Gastrocnemius medialis (tissue), 4 donors: ENCODE measurements at regions of chr6 and their contacts with region 1.

Region 1: DNA sequence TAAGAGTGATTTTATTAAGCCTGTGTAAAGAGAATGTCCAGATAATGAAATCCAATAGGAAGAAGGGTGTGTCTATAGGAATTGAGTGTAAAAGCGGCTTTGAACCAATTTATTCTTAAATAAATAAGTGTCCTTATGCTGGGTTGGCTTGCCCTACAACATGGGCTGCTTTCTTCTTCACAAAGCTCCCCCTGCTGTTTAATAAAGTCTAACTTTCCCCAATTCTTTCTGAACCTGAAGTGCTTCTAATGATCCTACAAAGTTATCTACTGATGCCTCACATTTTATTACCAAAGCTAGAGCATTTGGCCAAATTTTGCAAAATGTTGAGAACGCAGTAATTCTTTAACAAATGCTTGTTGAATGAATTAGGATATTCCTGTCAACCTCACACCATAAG is 36.3 kb upstream of the SIRT5 start:
- DNase-seq: no peak
- ATAC-seq: peak; percentile 85 to 86
- H3K4me3 ChIP-seq: no peak overlapping the region
- H3K27ac ChIP-seq: peak overlapping the region in 2 of 4 donors; percentile 14 to 17
- H3K4me1 ChIP-seq: peaks cover 0 to 3% of the 10 kb centered on the region in 2 donors
- H3K27me3 ChIP-seq: no peaks in the 10 kb centered on the region
- CTCF ChIP-seq: peak; percentile 56 to 68 (median 61)
- POLR2A ChIP-seq: no peak

Region 2: DNA sequence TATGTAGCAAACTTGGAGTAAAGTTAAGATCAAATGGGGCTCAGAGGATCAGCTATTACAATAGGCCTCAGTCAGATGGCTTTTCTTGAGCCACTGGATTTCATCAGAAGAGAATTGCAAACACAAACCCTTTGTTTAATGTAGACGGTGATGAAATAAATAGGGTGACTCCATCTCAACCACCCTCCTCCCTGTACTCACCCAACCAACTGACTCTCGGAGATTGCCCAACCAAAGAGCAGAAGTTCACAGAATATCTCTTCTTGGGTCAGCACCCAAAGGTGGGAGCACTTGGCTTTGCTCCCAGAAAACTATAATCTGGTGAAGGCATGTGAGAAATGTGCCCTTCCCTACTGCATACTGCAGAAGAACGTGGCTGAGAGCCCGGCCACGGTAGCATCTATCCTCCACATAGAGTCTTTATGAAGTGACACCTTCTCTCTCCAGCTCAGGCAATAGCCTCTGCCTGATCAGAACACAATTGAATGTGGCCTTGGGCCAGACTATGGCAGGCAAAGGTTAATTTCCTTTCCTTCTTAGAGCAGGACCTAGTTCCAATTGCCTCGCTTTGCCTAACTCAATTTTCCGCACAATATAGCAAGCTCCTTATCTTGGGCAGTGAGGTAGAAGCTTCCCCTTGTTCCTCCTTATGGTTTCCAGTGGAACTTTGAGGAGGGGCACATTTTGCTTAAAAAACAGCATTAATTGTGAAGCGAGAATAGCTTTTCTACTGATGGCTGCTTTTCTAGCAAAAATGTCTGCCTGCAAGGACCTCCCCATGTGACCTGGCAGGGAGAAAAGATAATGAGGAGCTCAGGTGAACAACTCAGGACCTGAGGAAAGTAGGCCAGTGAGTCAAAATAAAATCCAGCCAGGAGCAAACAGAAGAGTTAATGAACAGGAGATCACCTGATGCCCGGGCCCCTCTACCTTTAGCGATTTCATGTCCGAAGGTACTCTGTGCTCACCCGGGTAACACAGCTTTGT is 130.1 kb before region 1 on chr6:
- in situ Hi-C with region 1: loop called in 1 of 4 experiments (anchors 25 kb)
- intact Hi-C with region 1: no loop called
- DNase-seq: no peak
- ATAC-seq: peak; percentile 5 to 56
- H3K4me3 ChIP-seq: no peak overlapping the region
- H3K27ac ChIP-seq: peak overlapping the region; percentile 75 to 90 (median 78)
- H3K4me1 ChIP-seq: peaks cover 91 to 95% of the 10 kb centered on the region in 2 donors
- H3K27me3 ChIP-seq: no peaks in the 10 kb centered on the region
- CTCF ChIP-seq: no peak
- POLR2A ChIP-seq: no peak

Region 3: GRCh38 chr6:13454286-13455221 is 83.5 kb before region 1 on chr6:
- in situ Hi-C with region 1: no loop called
- intact Hi-C with region 1: loop called (anchors 2 kb)
- DNase-seq: peak; percentile 64
- ATAC-seq: peak; percentile 71 to 80
- H3K4me3 ChIP-seq: no peak overlapping the region
- H3K27ac ChIP-seq: peak overlapping the region; percentile 58 to 80 (median 72)
- H3K4me1 ChIP-seq: peaks cover 50 to 63% of the 10 kb centered on the region in 2 donors
- H3K27me3 ChIP-seq: no peaks in the 10 kb centered on the region
- CTCF ChIP-seq: peak in 4 of 5 experiments; percentile 24 to 50 (median 36)
- POLR2A ChIP-seq: no peak

Region 4: DNA sequence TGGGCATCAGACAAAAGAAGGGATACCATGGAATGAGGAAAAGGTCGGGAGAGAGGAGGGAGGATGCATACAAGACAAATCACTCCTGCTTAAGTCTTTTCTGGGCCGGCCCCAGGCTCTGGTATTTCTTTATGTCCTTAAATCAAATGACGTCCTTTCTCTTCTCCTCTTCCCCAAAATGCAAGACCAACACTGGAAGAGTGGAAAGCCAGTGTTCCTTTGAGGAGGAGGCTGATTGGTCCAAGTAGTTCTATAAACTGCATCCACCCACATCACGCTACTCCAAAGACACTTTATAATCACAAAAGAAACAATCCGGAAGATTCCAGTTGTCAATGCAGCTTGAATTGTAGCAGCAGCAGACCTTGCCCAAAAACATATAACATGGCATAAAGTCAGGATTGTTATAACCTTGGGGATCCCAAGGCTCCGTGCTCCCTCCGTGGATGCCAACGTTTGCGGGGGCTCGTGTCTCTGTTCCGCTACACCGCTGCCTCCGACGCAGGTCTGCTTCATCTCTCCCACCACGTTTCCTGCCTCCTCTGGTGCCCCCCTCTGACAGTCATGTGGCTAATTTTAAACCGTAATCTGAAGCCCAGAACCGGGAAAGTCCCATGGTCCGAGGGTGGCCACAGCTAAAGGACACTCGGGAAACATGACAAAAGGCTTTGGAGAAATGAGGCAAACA is 229.2 kb after region 1 on chr6:
- in situ Hi-C with region 1: no loop called
- intact Hi-C with region 1: no loop called
- DNase-seq: peak; percentile 43 to 66
- ATAC-seq: peak; percentile 86 to 92
- H3K4me3 ChIP-seq: peak overlapping the region; percentile 20 to 39 (median 25)
- H3K27ac ChIP-seq: peak overlapping the region in 2 of 4 donors; percentile 8 to 60
- H3K4me1 ChIP-seq: peaks cover 3 to 7% of the 10 kb centered on the region in 2 donors
- H3K27me3 ChIP-seq: no peaks in the 10 kb centered on the region
- CTCF ChIP-seq: peak in 1 of 5 experiments; percentile 11
- POLR2A ChIP-seq: no peak

Region 5: GRCh38 chr6:13881621-13882225 is 343.6 kb after region 1 on chr6:
- in situ Hi-C with region 1: no loop called
- intact Hi-C with region 1: no loop called
- DNase-seq: no peak
- ATAC-seq: no peak
- H3K4me3 ChIP-seq: no peak overlapping the region
- H3K27ac ChIP-seq: no peak overlapping the region
- H3K4me1 ChIP-seq: no peaks in the 10 kb centered on the region
- H3K27me3 ChIP-seq: no peaks in the 10 kb centered on the region
- CTCF ChIP-seq: no peak
- POLR2A ChIP-seq: no peak